CD4-positive, alpha-beta T cell (primary cell): ENCODE measurements at regions of chr11 and their contacts with region 1.

Region 1: DNA sequence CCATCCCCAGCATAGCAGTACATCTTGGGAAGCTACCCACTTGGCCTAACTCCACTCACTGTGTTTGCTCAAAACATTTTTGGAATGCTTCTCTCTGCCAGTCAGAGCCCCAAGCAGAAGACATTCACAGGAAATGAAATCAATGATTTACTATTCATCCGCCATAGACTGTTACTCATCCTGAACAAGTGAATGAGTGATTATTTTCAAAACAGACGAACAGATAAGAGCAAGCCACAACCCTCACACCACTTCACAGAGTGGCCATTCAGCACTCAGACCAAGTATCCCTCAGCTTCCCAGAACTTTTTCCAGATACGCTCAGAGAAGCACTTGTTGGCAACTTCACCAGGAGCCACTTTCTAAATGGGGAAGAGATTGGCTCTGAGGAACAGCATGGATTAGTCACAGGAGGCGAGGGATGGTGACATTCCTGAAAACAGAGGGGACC is 13.0 kb upstream of the UBASH3B start:
- DNase-seq: no peak
- ATAC-seq: no peak
- H3K4me3 ChIP-seq: no peak overlapping the region
- H3K4me3 Mint-ChIP-seq: no peak overlapping the region
- H3K27ac ChIP-seq: no peak overlapping the region
- H3K27ac Mint-ChIP-seq: no peak overlapping the region
- H3K4me1 ChIP-seq: peaks cover 1% of the 10 kb centered on the region
- H3K4me1 Mint-ChIP-seq: peaks cover 3% of the 10 kb centered on the region
- H3K27me3 ChIP-seq: no peaks in the 10 kb centered on the region
- H3K27me3 Mint-ChIP-seq: no peaks in the 10 kb centered on the region
- CTCF ChIP-seq: no peak

Region 2: DNA sequence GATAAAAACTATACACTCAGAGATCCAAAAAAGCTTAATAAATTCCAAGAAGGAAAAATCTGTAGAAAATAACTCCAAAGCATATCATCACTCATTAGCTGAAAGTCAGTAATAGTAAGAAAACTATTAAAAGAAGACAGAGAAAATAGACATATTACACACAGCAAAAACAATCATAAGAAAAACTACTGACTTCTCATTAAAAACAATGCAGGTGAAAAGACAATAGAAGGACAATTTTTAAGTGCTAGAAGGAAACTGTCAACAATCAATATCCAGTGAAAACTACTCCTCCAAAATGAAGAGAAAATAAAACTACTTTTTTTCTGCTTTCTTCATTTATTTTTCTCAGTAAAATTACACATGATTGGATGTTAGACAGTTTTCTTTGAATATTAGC is 582.9 kb before region 1 on chr11:
- CTCF ChIA-PET with region 1: no interaction called
- POLR2A ChIA-PET with region 1: no interaction called
- intact Hi-C with region 1: no loop called
- DNase-seq: no peak
- ATAC-seq: no peak
- H3K4me3 ChIP-seq: no peak overlapping the region
- H3K4me3 Mint-ChIP-seq: no peak overlapping the region
- H3K27ac ChIP-seq: no peak overlapping the region
- H3K27ac Mint-ChIP-seq: no peak overlapping the region
- H3K4me1 ChIP-seq: no peaks in the 10 kb centered on the region
- H3K4me1 Mint-ChIP-seq: no peaks in the 10 kb centered on the region
- H3K27me3 ChIP-seq: no peaks in the 10 kb centered on the region
- H3K27me3 Mint-ChIP-seq: no peaks in the 10 kb centered on the region
- CTCF ChIP-seq: no peak

Region 3: GRCh38 chr11:122422707-122423106 is 219.8 kb before region 1 on chr11:
- CTCF ChIA-PET with region 1: no interaction called
- POLR2A ChIA-PET with region 1: no interaction called
- intact Hi-C with region 1: no loop called
- DNase-seq: no peak
- ATAC-seq: no peak
- H3K4me3 ChIP-seq: no peak overlapping the region
- H3K4me3 Mint-ChIP-seq: no peak overlapping the region
- H3K27ac ChIP-seq: no peak overlapping the region
- H3K27ac Mint-ChIP-seq: no peak overlapping the region
- H3K4me1 ChIP-seq: no peaks in the 10 kb centered on the region
- H3K4me1 Mint-ChIP-seq: no peaks in the 10 kb centered on the region
- H3K27me3 ChIP-seq: no peaks in the 10 kb centered on the region
- H3K27me3 Mint-ChIP-seq: peaks cover 9% of the 10 kb centered on the region
- CTCF ChIP-seq: no peak

Region 4: GRCh38 chr11:122619757-122620156 is 22.7 kb before region 1 on chr11:
- CTCF ChIA-PET with region 1: no interaction called
- POLR2A ChIA-PET with region 1: no interaction called
- intact Hi-C with region 1: loop called in 1 of 2 experiments (anchors 2 kb)
- DNase-seq: no peak
- ATAC-seq: no peak
- H3K4me3 ChIP-seq: no peak overlapping the region
- H3K4me3 Mint-ChIP-seq: no peak overlapping the region
- H3K27ac ChIP-seq: no peak overlapping the region
- H3K27ac Mint-ChIP-seq: no peak overlapping the region
- H3K4me1 ChIP-seq: no peaks in the 10 kb centered on the region
- H3K4me1 Mint-ChIP-seq: no peaks in the 10 kb centered on the region
- H3K27me3 ChIP-seq: no peaks in the 10 kb centered on the region
- H3K27me3 Mint-ChIP-seq: no peaks in the 10 kb centered on the region
- CTCF ChIP-seq: no peak